AG04449 (cell line): ENCODE measurements at regions of chr12 and their contacts with region 1.

Region 1: DNA sequence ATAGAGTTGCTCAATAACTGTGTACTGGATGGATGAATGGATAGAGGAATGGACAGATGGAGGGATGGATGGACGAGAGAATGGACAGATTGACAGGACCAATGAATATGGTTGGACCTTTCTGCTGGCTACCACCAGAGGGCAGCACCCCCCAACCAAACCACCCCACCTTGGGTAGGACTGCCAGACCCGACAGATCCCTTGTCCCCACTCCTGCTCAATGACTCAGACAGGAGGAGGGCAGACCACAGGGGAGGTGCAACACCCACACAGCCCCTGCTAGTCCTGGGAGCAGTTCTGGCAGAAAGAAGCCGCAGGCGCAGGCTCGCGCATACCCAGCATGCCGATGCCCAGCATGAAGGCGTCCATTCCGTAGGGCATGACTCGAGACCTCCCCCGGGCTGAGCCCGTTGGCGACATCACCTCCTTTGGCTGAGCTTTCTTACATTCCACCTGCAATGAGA is 12.4 kb downstream of the MSI1 start:
- DNase-seq: peak; percentile 42
- H3K4me3 ChIP-seq: no peak overlapping the region
- CTCF ChIP-seq: peak; percentile 83

Region 2: GRCh38 chr12:120224324-120225199 is 132.0 kb before region 1 on chr12:
- CTCF ChIA-PET with region 1: no interaction called
- POLR2A ChIA-PET with region 1: no interaction called
- DNase-seq: no peak
- H3K4me3 ChIP-seq: no peak overlapping the region
- CTCF ChIP-seq: no peak

Region 3: GRCh38 chr12:120367233-120367923 is 10.8 kb after region 1 on chr12:
- CTCF ChIA-PET with region 1: interaction called, 18 read pairs
- POLR2A ChIA-PET with region 1: interaction called, 8 read pairs
- DNase-seq: no peak
- H3K4me3 ChIP-seq: no peak overlapping the region
- CTCF ChIP-seq: peak; percentile 19